ENCODE measurements at regions of chr11 and their contacts with region 1.

Region 1: DNA sequence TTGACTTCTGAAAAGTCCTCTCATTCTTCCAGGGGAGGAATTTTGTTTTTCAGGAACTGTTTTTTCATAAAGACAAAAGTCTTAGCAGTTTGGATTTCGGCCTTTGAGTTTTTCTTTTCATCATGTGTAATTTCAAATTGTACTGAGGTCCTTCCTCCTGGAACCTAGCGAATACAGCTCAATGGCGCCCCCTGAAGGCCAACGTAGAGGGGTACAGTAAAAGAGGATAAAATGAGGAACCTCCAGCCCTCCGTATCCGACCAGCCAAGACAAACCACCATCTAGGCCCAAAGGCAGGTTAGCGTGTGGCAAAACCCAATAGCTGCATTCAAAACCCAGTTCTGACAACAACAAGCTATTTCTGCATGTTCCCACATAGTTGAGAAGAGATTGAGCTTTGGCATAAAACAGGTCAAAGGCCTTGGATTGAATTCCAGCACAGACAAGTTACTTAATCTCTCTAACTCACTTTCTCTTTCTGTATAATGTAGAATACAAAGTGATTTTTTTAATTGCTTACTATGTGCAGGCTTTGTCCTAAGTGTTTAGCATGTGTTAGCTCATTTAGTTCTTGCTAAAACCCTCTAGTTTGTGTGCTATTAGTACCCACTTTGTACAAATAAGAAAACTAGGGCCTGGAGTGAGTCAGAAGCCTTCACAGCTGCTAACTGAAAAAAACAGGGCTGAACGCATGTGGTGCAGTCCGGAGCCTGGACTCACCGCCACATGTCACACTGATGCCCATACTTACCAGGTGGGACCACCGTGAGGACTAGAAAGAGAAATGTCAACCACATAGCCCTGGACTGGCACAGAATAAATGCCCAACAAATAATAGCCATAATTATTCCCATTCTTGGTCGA is 43.2 kb upstream of the ETS1 start:
- DNase-seq: peak; percentile 97
- ATAC-seq: peak; percentile 73
- H3K4me3 Mint-ChIP-seq: peak overlapping the region; percentile 57
- H3K27ac Mint-ChIP-seq: peak overlapping the region; percentile 88
- H3K4me1 Mint-ChIP-seq: peaks cover 66% of the 10 kb centered on the region
- H3K27me3 Mint-ChIP-seq: no peaks in the 10 kb centered on the region

Region 2: GRCh38 chr11:128157423-128158298 is 472.9 kb before region 1 on chr11:
- CTCF ChIA-PET with region 1: interaction called, 48 read pairs
- POLR2A ChIA-PET with region 1: no interaction called
- intact Hi-C with region 1: loop called (anchors 1 kb)
- DNase-seq: peak; percentile 68
- ATAC-seq: peak; percentile 91
- H3K4me3 Mint-ChIP-seq: peak overlapping the region; percentile 60
- H3K27ac Mint-ChIP-seq: peak overlapping the region; percentile 86
- H3K4me1 Mint-ChIP-seq: peaks cover 10% of the 10 kb centered on the region
- H3K27me3 Mint-ChIP-seq: no peaks in the 10 kb centered on the region

Region 3: GRCh38 chr11:128323381-128323780 is 307.2 kb before region 1 on chr11:
- CTCF ChIA-PET with region 1: interaction called, 12 read pairs
- POLR2A ChIA-PET with region 1: interaction called, 3 read pairs
- intact Hi-C with region 1: no loop called
- DNase-seq: peak; percentile 67
- ATAC-seq: peak; percentile 8
- H3K4me3 Mint-ChIP-seq: peak overlapping the region; percentile 62
- H3K27ac Mint-ChIP-seq: peak overlapping the region; percentile 98
- H3K4me1 Mint-ChIP-seq: peaks cover 91% of the 10 kb centered on the region
- H3K27me3 Mint-ChIP-seq: no peaks in the 10 kb centered on the region

Region 4: DNA sequence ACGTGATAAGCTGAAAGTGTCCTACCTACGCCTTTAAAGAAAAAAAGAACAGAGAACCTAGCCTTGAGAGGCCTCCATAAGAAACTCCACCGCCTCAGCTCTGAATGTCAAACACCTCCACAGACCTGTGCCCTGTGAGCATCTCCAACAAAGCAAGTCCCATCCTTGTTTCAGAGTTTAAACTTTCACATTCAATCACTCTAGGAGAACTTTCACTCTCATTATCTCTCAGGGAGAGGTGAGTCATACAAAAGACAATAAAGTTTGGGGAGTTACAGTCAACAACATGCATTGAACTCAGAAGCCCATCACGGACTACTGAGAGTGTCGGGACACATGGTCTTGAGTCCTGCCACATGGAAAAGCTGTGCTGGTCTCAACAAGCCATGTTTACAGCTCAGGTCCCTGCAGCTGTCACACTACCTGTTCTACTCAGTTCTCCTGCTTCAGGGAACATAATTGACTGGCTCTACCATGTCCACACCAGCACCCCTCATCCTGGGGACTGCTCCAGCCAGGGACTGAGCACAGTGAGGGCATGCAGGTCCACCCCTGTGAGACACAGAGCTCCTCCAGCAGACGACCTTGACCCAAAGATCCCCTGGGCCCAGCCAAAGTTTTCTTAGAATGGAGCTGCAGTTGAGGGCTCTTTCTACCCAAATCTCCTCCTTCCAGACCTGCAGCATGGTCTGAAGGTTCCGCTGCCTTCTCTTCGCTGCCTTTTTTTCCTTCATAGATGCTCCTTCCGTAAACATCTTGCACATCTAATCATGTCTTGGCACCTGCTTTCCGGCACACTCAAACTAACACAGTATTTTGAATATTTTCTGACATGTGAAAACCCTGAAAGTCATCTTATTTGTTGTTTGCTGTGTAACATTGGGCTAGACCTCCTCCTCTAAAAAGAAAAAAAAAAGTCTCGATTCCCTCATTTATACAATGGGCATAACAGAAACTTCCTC is 158.2 kb before region 1 on chr11:
- CTCF ChIA-PET with region 1: interaction called, 86 read pairs
- POLR2A ChIA-PET with region 1: interaction called, 10 read pairs
- intact Hi-C with region 1: loop called in 1 of 2 experiments (anchors 2 kb)
- DNase-seq: peak; percentile 83
- ATAC-seq: peak; percentile 67
- H3K4me3 Mint-ChIP-seq: peak overlapping the region; percentile 72
- H3K27ac Mint-ChIP-seq: peak overlapping the region; percentile 99
- H3K4me1 Mint-ChIP-seq: peaks cover 97% of the 10 kb centered on the region
- H3K27me3 Mint-ChIP-seq: no peaks in the 10 kb centered on the region

Region 5: DNA sequence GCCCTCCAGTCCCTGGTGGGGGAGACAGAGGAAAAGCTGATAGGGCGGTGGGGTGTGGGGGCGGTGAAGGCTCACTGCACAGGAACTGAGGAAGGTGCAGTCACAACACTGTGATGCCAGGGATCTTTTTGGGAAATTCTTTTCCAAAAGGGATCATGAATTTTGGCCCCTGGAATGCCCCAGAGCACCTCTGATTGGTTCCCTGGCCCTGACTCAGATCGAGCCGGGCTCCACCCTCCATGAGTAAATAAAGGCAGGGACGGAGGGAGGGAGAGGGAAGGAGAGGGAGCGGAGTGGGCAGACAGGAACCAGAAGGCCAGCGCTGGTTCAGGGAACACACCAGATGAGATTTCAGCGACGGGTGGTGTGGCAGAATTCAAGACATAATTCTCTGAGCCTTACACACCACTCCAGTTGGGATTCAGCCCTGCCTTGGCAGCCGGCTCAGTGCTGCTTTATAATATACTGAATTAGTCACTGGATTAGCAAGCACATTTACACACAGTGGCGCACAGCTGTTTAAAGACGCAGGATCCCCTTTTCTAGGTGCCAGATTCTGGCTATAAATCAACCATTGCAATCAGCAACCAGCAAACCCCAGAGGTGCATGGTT is 123.5 kb before region 1 on chr11:
- CTCF ChIA-PET with region 1: interaction called, 65 read pairs
- POLR2A ChIA-PET with region 1: interaction called, 3 read pairs
- intact Hi-C with region 1: loop called (anchors 2 kb)
- DNase-seq: peak; percentile 80
- ATAC-seq: peak; percentile 58
- H3K4me3 Mint-ChIP-seq: peak overlapping the region; percentile 96
- H3K27ac Mint-ChIP-seq: peak overlapping the region; percentile 98
- H3K4me1 Mint-ChIP-seq: peaks cover 89% of the 10 kb centered on the region
- H3K27me3 Mint-ChIP-seq: no peaks in the 10 kb centered on the region

Region 6: DNA sequence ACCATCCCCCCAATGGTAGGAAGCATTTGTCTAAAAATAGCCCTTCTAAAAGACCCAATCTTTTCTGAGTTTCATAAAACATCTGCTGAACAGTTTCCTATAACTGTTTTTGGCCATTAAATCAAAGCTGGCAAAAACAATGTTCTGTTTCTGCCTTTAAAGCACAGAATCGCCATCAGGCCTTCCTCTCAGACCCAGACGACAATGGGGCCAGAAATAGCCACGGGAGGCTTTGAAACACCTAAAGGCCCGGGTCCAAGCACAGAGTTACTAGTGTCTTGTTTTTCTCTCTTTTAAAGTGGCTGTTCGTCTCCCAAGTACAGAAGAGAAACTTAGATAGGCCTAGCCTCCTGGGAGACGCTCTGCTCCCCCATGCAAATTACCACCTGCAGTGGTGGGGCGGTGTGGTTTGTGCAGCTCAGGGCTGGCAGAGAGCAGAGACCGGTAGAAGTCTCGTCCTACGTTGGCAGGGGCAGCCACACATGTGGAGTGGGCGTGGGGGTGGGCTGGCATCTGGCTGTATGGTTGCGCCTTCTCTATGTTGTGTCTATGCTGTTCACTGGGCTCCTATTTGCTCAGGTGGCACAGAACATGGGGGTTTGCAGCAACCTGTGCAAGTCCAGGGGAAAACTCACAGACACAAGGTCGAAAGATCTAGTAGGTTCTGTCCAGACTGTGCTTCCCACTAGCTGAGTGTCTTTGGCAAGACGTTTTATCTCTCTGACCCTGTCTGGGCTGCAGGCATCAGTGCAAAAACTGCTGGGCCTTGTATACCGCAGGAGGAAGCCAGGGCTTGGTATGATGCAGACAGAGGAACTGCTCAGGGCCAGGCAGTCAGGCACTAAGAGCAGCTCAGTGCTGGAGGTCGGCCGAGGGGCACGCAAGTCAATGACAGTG is 19.6 kb before region 1 on chr11:
- CTCF ChIA-PET with region 1: interaction called, 23 read pairs
- POLR2A ChIA-PET with region 1: interaction called, 3 read pairs
- intact Hi-C with region 1: loop called in 1 of 2 experiments (anchors 2 kb)
- DNase-seq: peak; percentile 62
- ATAC-seq: peak; percentile 87
- H3K4me3 Mint-ChIP-seq: peak overlapping the region; percentile 51
- H3K27ac Mint-ChIP-seq: peak overlapping the region; percentile 96
- H3K4me1 Mint-ChIP-seq: peaks cover 45% of the 10 kb centered on the region
- H3K27me3 Mint-ChIP-seq: no peaks in the 10 kb centered on the region

Region 7: GRCh38 chr11:128653801-128654231 is 23.2 kb after region 1 on chr11:
- CTCF ChIA-PET with region 1: no interaction called
- POLR2A ChIA-PET with region 1: no interaction called
- intact Hi-C with region 1: no loop called
- DNase-seq: peak; percentile 14
- ATAC-seq: no peak
- H3K4me3 Mint-ChIP-seq: no peak overlapping the region
- H3K27ac Mint-ChIP-seq: no peak overlapping the region
- H3K4me1 Mint-ChIP-seq: peaks cover 16% of the 10 kb centered on the region
- H3K27me3 Mint-ChIP-seq: peaks cover 10% of the 10 kb centered on the region

Region 8: DNA sequence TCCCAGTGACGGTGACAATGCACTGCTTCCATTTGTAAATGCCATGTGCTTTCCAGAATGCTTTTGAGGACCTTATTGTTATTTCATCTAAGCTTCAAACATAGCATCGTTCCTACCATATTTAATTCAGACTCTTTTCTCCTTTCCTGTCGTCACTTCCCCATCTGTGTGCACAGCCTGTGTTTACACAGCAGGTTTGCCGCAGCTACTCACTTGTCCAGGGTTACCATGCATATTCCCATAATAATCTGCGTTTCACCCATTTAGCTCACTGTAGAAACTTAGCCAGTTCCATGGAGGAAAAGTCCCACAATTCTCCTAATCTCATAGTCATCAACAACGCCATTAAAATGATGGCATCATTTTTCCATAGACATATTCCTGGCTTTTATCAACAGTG is 111.3 kb after region 1 on chr11:
- CTCF ChIA-PET with region 1: no interaction called
- POLR2A ChIA-PET with region 1: no interaction called
- intact Hi-C with region 1: no loop called
- DNase-seq: no peak
- ATAC-seq: no peak
- H3K4me3 Mint-ChIP-seq: no peak overlapping the region
- H3K27ac Mint-ChIP-seq: no peak overlapping the region
- H3K4me1 Mint-ChIP-seq: peaks cover 79% of the 10 kb centered on the region
- H3K27me3 Mint-ChIP-seq: no peaks in the 10 kb centered on the region

Region 9: DNA sequence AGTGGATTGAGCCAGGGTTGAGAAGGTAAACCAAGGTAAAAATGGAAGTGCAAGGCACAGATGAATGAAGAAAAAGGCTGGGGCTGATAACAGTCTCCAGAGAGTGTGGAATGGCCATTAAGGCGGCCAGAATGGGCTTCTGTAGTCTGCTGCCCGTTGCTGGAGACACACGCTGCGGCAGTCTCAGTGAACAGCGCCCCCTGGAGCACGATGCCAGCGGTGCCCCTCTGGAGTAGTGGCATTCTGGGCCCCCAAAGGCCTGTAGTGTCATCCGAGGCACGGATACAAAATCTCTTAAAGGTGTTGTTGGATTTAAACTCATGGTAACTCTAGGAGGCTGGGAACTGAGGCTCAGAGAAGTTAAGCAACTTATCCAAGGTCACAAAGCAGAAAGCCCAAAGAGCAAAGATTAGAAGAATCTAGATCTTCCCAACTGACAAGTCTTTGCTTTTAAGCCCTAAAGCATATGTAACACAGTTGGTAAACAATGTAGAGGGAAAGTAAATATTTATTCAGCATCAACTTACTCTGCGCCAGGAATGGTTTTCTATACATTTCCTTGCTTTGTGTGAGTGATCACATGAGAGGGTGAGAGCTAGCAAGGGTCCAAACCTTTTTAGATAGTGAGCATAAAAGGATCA is 218.3 kb after region 1 on chr11:
- CTCF ChIA-PET with region 1: interaction called, 13 read pairs
- POLR2A ChIA-PET with region 1: no interaction called
- intact Hi-C with region 1: no loop called
- DNase-seq: peak; percentile 84
- ATAC-seq: peak; percentile 85
- H3K4me3 Mint-ChIP-seq: no peak overlapping the region
- H3K27ac Mint-ChIP-seq: no peak overlapping the region
- H3K4me1 Mint-ChIP-seq: peaks cover 18% of the 10 kb centered on the region
- H3K27me3 Mint-ChIP-seq: no peaks in the 10 kb centered on the region

Region 10: GRCh38 chr11:129277274-129277787 is 646.7 kb after region 1 on chr11:
- CTCF ChIA-PET with region 1: no interaction called
- POLR2A ChIA-PET with region 1: no interaction called
- intact Hi-C with region 1: no loop called
- DNase-seq: no peak
- ATAC-seq: no peak
- H3K4me3 Mint-ChIP-seq: peak overlapping the region; percentile 78
- H3K27ac Mint-ChIP-seq: no peak overlapping the region
- H3K4me1 Mint-ChIP-seq: peaks cover 31% of the 10 kb centered on the region
- H3K27me3 Mint-ChIP-seq: peaks cover 17% of the 10 kb centered on the region

Measured in activated CD4-positive, alpha-beta T cell treated with anti-CD3 and anti-CD28 coated beads for 36 hours (primary cell).